ENCODE measurements at regions of chr21 and their contacts with region 1.

Region 1: GRCh38 chr21:44873356-44874239 is at the start of gene PTTG1IP:
- DNase-seq: peak; percentile 98 to 100 (median 99)
- ATAC-seq: peak; percentile 76
- H3K4me3 ChIP-seq: peak within 1 kb of the TSS; percentile 76
- H3K4me3 Mint-ChIP-seq: peak within 1 kb of the TSS; percentile 97
- H3K27ac ChIP-seq: peak within 1 kb of the TSS; percentile 78 to 81
- H3K27ac Mint-ChIP-seq: peak within 1 kb of the TSS; percentile 92
- H3K4me1 ChIP-seq: peaks cover 62% of the 10 kb centered on the region
- H3K4me1 Mint-ChIP-seq: peaks cover 60% of the 10 kb centered on the region
- H3K27me3 ChIP-seq: no peaks in the 10 kb centered on the region
- H3K27me3 Mint-ChIP-seq: no peaks in the 10 kb centered on the region
- CTCF ChIP-seq: no peak
- total RNA-seq, gene PTTG1IP: 99.0 to 99.5 TPM

Region 2: GRCh38 chr21:44338971-44339910 is 534.4 kb before region 1 on chr21 and contains the start of gene CFAP410:
- CTCF ChIA-PET with region 1: no interaction called
- POLR2A ChIA-PET with region 1: interaction called, 8 read pairs
- intact Hi-C with region 1: loop called in 1 of 2 experiments (anchors 10 kb)
- DNase-seq: peak; percentile 87 to 98 (median 94)
- ATAC-seq: peak; percentile 88
- H3K4me3 ChIP-seq: peak within 1 kb of the TSS; percentile 90
- H3K4me3 Mint-ChIP-seq: peak within 1 kb of the TSS; percentile 93
- H3K27ac ChIP-seq: peak within 1 kb of the TSS; percentile 93 to 96
- H3K27ac Mint-ChIP-seq: peak within 1 kb of the TSS; percentile 99
- H3K4me1 ChIP-seq: peaks cover 20% of the 10 kb centered on the region
- H3K4me1 Mint-ChIP-seq: peaks cover 25% of the 10 kb centered on the region
- H3K27me3 ChIP-seq: no peaks in the 10 kb centered on the region
- H3K27me3 Mint-ChIP-seq: no peaks in the 10 kb centered on the region
- CTCF ChIP-seq: no peak
- total RNA-seq, gene CFAP410: 50.1 to 51.6 TPM

Region 3: GRCh38 chr21:44801468-44802395 is 71.9 kb before region 1 on chr21 and contains the start of gene UBE2G2:
- CTCF ChIA-PET with region 1: interaction called, 46 read pairs
- POLR2A ChIA-PET with region 1: interaction called, 55 read pairs
- intact Hi-C with region 1: loop called (anchors 1 kb)
- DNase-seq: peak; percentile 75 to 93 (median 85)
- ATAC-seq: peak; percentile 88
- H3K4me3 ChIP-seq: peak within 1 kb of the TSS; percentile 78
- H3K4me3 Mint-ChIP-seq: peak within 1 kb of the TSS; percentile 95
- H3K27ac ChIP-seq: peak within 1 kb of the TSS; percentile 25 to 66
- H3K27ac Mint-ChIP-seq: peak within 1 kb of the TSS; percentile 80
- H3K4me1 ChIP-seq: peaks cover 28% of the 10 kb centered on the region
- H3K4me1 Mint-ChIP-seq: peaks cover 55% of the 10 kb centered on the region
- H3K27me3 ChIP-seq: no peaks in the 10 kb centered on the region
- H3K27me3 Mint-ChIP-seq: no peaks in the 10 kb centered on the region
- CTCF ChIP-seq: no peak
- total RNA-seq, gene UBE2G2: 89.9 to 96.8 TPM

Region 4: GRCh38 chr21:44845399-44846223 is 28.0 kb before region 1 on chr21:
- CTCF ChIA-PET with region 1: interaction called, 5 read pairs
- POLR2A ChIA-PET with region 1: interaction called, 8 read pairs
- intact Hi-C with region 1: loop called in 1 of 2 experiments (anchors 2 kb)
- DNase-seq: peak in 12 of 14 experiments; percentile 24 to 74 (median 38)
- ATAC-seq: peak; percentile 66
- H3K4me3 ChIP-seq: peak overlapping the region; percentile 52
- H3K4me3 Mint-ChIP-seq: peak overlapping the region; percentile 80
- H3K27ac ChIP-seq: no peak overlapping the region
- H3K27ac Mint-ChIP-seq: peak overlapping the region; percentile 86
- H3K4me1 ChIP-seq: peaks cover 25% of the 10 kb centered on the region
- H3K4me1 Mint-ChIP-seq: peaks cover 12% of the 10 kb centered on the region
- H3K27me3 ChIP-seq: no peaks in the 10 kb centered on the region
- H3K27me3 Mint-ChIP-seq: no peaks in the 10 kb centered on the region
- CTCF ChIP-seq: peak; percentile 63

Region 5: GRCh38 chr21:44911389-44912157 is 38.0 kb after region 1 on chr21:
- CTCF ChIA-PET with region 1: no interaction called
- POLR2A ChIA-PET with region 1: interaction called, 12 read pairs
- intact Hi-C with region 1: loop called in 1 of 2 experiments (anchors 5 kb)
- DNase-seq: peak; percentile 45 to 88 (median 69)
- ATAC-seq: peak; percentile 74
- H3K4me3 ChIP-seq: peak overlapping the region; percentile 44
- H3K4me3 Mint-ChIP-seq: peak overlapping the region; percentile 76
- H3K27ac ChIP-seq: peak overlapping the region; percentile 77 to 86
- H3K27ac Mint-ChIP-seq: peak overlapping the region; percentile 88
- H3K4me1 ChIP-seq: peaks cover 98% of the 10 kb centered on the region
- H3K4me1 Mint-ChIP-seq: peaks cover 77% of the 10 kb centered on the region
- H3K27me3 ChIP-seq: no peaks in the 10 kb centered on the region
- H3K27me3 Mint-ChIP-seq: no peaks in the 10 kb centered on the region
- CTCF ChIP-seq: peak; percentile 58

Region 6: GRCh38 chr21:44939532-44940115 is 66.0 kb after region 1 on chr21 and contains the start of gene SLX9:
- CTCF ChIA-PET with region 1: interaction called, 3 read pairs
- POLR2A ChIA-PET with region 1: interaction called, 17 read pairs
- intact Hi-C with region 1: no loop called
- DNase-seq: peak; percentile 59 to 90 (median 76)
- ATAC-seq: peak; percentile 94
- H3K4me3 ChIP-seq: peak within 1 kb of the TSS; percentile 83
- H3K4me3 Mint-ChIP-seq: peak within 1 kb of the TSS; percentile 93
- H3K27ac ChIP-seq: peak within 1 kb of the TSS in 1 of 2 donors; percentile 18
- H3K27ac Mint-ChIP-seq: peak within 1 kb of the TSS; percentile 86
- H3K4me1 ChIP-seq: peaks cover 49% of the 10 kb centered on the region
- H3K4me1 Mint-ChIP-seq: peaks cover 38% of the 10 kb centered on the region
- H3K27me3 ChIP-seq: no peaks in the 10 kb centered on the region
- H3K27me3 Mint-ChIP-seq: no peaks in the 10 kb centered on the region
- CTCF ChIP-seq: no peak
- total RNA-seq, gene SLX9: 7.7 to 9.1 TPM

Region 7: GRCh38 chr21:45578176-45578801 is 704.7 kb after region 1 on chr21:
- CTCF ChIA-PET with region 1: no interaction called
- POLR2A ChIA-PET with region 1: no interaction called
- intact Hi-C with region 1: no loop called
- DNase-seq: no peak
- ATAC-seq: no peak
- H3K4me3 ChIP-seq: no peak overlapping the region
- H3K4me3 Mint-ChIP-seq: no peak overlapping the region
- H3K27ac ChIP-seq: no peak overlapping the region
- H3K27ac Mint-ChIP-seq: no peak overlapping the region
- H3K4me1 ChIP-seq: no peaks in the 10 kb centered on the region
- H3K4me1 Mint-ChIP-seq: no peaks in the 10 kb centered on the region
- H3K27me3 ChIP-seq: no peaks in the 10 kb centered on the region
- H3K27me3 Mint-ChIP-seq: no peaks in the 10 kb centered on the region
- CTCF ChIP-seq: no peak

Measured in CD4-positive, alpha-beta T cell (primary cell).